Thyroid gland (tissue), 4 donors: ENCODE measurements at regions of chr11 and their contacts with region 1.

Region 1: DNA sequence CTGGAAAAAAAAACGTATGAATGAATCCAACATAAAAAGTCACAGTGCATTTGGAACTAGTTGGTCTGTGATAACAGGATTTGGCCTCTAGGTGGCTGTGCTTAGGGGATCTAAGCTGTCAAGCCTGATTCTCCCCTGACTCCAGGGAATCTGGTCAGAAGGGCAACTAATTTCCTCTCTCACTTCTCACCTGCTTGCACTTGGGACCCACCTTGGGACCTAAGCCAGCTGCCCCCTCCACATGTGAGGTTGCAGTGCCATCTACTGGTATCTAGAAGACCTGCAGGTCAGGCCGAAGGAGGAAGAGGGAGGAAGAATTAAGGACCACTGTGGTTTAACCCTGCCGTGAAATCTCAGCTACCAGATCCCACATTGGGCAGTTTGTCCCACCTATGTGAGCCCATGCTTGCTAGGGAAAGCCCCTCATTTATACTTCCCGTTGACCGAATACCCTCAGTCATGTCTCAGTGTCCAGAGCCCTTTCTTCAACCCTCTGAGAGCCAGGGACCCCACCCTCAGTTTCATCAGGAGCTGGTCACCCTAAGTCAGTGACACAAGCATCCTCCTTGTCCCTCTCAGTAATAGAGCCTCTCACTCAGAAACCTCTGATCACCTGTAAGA is 33.2 kb upstream of the CAVIN3 start:
- DNase-seq: peak; percentile 58 to 62
- H3K4me3 ChIP-seq: no peak overlapping the region
- H3K27ac ChIP-seq: no peak overlapping the region
- H3K4me1 ChIP-seq: no peaks in the 10 kb centered on the region
- H3K27me3 ChIP-seq: no peaks in the 10 kb centered on the region
- CTCF ChIP-seq: peak; percentile 67 to 95 (median 86)
- POLR2A ChIP-seq: no peak

Region 2: GRCh38 chr11:6022956-6023355 is 330.5 kb before region 1 on chr11:
- intact Hi-C with region 1: loop called (anchors 10 kb)
- DNase-seq: no peak
- H3K4me3 ChIP-seq: no peak overlapping the region
- H3K27ac ChIP-seq: no peak overlapping the region
- H3K4me1 ChIP-seq: no peaks in the 10 kb centered on the region
- H3K27me3 ChIP-seq: no peaks in the 10 kb centered on the region
- CTCF ChIP-seq: peak in 3 of 6 experiments; percentile 32 to 39 (median 34)
- POLR2A ChIP-seq: no peak

Region 3: GRCh38 chr11:6251120-6251733 is 102.2 kb before region 1 on chr11:
- intact Hi-C with region 1: loop called (anchors 5 kb)
- DNase-seq: peak; percentile 75 to 78
- H3K4me3 ChIP-seq: no peak overlapping the region
- H3K27ac ChIP-seq: no peak overlapping the region
- H3K4me1 ChIP-seq: no peaks in the 10 kb centered on the region
- H3K27me3 ChIP-seq: no peaks in the 10 kb centered on the region
- CTCF ChIP-seq: peak; percentile 61 to 99 (median 92)
- POLR2A ChIP-seq: no peak